Heart right ventricle (tissue), 16 donors: ENCODE measurements at regions of chr9 and their contacts with region 1.

Region 1: GRCh38 chr9:96232539-96233241 is 69.3 kb downstream of the HSD17B3 start:
- DNase-seq: peak; percentile 61 to 67
- ATAC-seq: peak; percentile 77 to 92 (median 88)
- H3K4me3 ChIP-seq: peak overlapping the region in 2 of 10 donors; percentile 12 to 16
- H3K27ac ChIP-seq: peak overlapping the region in 8 of 10 donors; percentile 0 to 78 (median 44)
- H3K4me1 ChIP-seq: peaks cover 3 to 21% (median 13%) of the 10 kb centered on the region in 9 donors
- H3K27me3 ChIP-seq: peaks cover 0 to 4% (median 0%) of the 10 kb centered on the region in 7 donors
- CTCF ChIP-seq: peak; percentile 70 to 92 (median 88)

Region 2: DNA sequence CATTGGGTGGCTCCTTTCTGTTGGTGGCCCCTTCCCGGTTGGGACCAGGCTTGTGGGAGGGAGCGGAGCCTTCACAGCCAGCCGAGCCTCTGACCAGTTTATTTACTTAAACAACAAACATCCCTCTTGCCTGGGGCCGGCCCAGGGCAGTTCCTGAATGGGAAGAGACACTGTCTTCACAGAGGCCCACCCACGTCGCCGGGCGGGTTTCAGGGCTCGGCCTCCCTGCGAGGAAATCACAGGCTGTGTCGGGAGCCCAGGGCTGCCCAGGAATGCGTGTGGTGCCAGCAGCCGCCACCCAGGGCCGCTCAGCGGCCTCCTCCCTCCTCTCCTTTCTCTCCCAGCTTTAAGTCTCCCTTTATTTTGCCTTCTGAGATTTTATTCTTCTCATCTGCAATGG is 63.2 kb before region 1 on chr9:
- intact Hi-C with region 1: no loop called
- DNase-seq: peak in 1 of 2 donors; percentile 35
- ATAC-seq: peak in 2 of 8 donors; percentile 13 to 34
- H3K4me3 ChIP-seq: no peak overlapping the region
- H3K27ac ChIP-seq: peak overlapping the region in 1 of 10 donors; percentile 56
- H3K4me1 ChIP-seq: no peaks in the 10 kb centered on the region
- H3K27me3 ChIP-seq: peaks cover 0 to 67% (median 21%) of the 10 kb centered on the region in 7 donors
- CTCF ChIP-seq: no peak

Region 3: GRCh38 chr9:96309850-96310249 is 77.2 kb after region 1 on chr9:
- intact Hi-C with region 1: loop called in 6 of 10 experiments (anchors 5 kb)
- DNase-seq: no peak
- ATAC-seq: no peak
- H3K4me3 ChIP-seq: no peak overlapping the region
- H3K27ac ChIP-seq: no peak overlapping the region
- H3K4me1 ChIP-seq: no peaks in the 10 kb centered on the region
- H3K27me3 ChIP-seq: no peaks in the 10 kb centered on the region
- CTCF ChIP-seq: no peak

Region 4: DNA sequence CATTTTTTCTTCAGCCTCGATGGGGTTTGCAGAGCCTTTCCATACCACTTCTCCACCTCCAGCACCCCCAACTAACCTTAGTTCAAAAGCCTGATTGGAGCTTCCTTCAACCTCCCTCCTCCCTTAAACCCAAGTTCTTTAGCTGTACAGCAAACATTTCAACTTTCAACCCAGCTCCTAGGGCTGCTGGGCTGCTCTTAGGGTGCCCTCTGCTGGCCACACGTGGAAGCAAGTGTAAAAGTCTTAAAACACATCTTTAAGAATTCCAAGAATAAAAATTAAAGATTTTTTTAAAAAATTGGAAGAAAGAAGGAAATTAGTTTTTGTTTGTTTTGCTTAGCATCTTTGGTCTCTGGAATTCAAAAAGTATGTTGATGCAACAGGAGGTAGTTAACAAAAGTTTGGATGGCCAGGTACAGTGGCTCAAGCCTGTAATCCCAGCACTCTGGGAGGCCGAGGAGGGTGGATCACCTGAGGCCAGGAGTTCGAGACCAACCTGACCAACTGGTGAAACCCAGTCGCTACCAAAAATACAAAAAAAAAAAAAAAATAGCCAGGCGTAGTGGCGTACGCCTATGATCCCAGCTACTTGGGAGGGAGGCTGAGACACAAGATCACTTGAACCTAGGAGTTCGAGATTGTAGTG is 84.8 kb after region 1 on chr9:
- intact Hi-C with region 1: loop called (anchors 2 to 5 kb)
- DNase-seq: peak; percentile 40 to 46
- ATAC-seq: peak in 6 of 8 donors; percentile 57 to 72 (median 64)
- H3K4me3 ChIP-seq: no peak overlapping the region
- H3K27ac ChIP-seq: no peak overlapping the region
- H3K4me1 ChIP-seq: no peaks in the 10 kb centered on the region
- H3K27me3 ChIP-seq: no peaks in the 10 kb centered on the region
- CTCF ChIP-seq: peak; percentile 70 to 93 (median 83)

Region 5: DNA sequence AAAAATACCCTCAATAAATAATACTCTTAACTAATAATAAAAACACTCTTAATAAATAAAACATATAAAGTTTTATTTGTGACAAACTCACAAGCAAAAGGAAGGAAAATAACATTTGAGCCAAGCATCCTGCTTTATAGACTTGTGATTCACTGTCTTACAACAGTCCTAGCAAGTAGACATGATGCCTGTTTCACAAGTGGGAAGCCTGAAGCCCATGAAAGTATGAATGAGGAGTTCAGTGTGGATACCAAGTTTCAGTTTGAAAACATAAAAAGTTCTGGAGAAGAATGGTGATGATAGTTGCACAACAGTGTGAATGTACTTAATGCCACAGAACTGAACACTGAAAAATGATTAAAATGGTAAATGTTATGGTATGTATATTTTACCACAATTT is 228.2 kb after region 1 on chr9:
- intact Hi-C with region 1: no loop called
- DNase-seq: no peak
- ATAC-seq: no peak
- H3K4me3 ChIP-seq: no peak overlapping the region
- H3K27ac ChIP-seq: no peak overlapping the region
- H3K4me1 ChIP-seq: peaks cover 0 to 7% (median 0%) of the 10 kb centered on the region in 9 donors
- H3K27me3 ChIP-seq: no peaks in the 10 kb centered on the region
- CTCF ChIP-seq: no peak